ENCODE measurements at regions of chr13 and their contacts with region 1.

Region 1: GRCh38 chr13:77477299-77477848 is 58.1 kb upstream of the SCEL start:
- DNase-seq: no peak
- H3K4me3 ChIP-seq: peak overlapping the region in 1 of 4 donors; percentile 51
- H3K27ac ChIP-seq: no peak overlapping the region
- H3K4me1 ChIP-seq: peaks cover 0 to 5% of the 10 kb centered on the region in 2 donors
- H3K27me3 ChIP-seq: no peaks in the 10 kb centered on the region
- CTCF ChIP-seq: no peak
- POLR2A ChIP-seq: no peak

Region 2: DNA sequence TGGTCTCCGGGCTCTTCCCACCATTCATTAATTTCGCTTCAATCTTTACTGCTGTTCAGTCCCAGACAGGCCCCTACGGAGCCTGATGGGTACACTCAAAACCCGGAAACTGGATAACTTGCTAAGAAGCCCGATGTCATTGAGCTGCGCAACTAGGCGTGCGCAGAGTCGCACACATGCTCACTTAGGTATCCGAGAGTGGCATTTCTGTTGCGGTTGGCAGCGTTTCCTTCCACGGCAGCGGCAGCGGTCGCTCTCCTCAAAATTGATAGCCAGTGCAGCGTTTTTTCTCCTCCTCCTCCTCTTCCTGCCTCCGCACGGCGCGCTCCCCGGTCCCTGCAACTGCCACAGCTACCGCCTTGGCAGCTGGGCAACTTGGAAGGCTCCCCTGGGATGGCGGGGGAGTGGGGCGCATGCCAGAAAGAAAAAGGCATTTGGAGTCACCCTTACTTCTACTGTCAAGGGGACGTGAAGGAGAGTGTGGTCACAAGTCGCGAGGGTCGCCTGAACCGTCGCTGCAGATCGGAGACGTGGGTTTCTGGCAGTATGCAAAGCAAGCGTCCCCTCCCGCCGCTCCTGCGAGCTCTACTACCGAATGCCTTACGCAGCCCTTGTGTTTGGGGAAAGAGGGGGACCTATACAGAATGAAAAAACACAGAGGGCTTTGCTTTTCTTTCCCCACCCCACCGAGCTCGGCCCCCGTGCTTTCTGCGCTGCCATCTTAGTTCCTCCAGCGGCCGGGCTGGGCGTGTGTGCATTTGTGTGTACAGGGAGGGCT is 148.1 kb before region 1 on chr13:
- intact Hi-C with region 1: loop called (anchors 5 to 10 kb)
- DNase-seq: peak; percentile 85 to 95 (median 88)
- H3K4me3 ChIP-seq: peak overlapping the region; percentile 12 to 77 (median 43)
- H3K27ac ChIP-seq: peak overlapping the region; percentile 63 to 88 (median 77)
- H3K4me1 ChIP-seq: peaks cover 4 to 27% of the 10 kb centered on the region in 2 donors
- H3K27me3 ChIP-seq: no peaks in the 10 kb centered on the region
- CTCF ChIP-seq: peak in 1 of 6 experiments; percentile 9
- POLR2A ChIP-seq: peak; percentile 73 to 75

Region 3: DNA sequence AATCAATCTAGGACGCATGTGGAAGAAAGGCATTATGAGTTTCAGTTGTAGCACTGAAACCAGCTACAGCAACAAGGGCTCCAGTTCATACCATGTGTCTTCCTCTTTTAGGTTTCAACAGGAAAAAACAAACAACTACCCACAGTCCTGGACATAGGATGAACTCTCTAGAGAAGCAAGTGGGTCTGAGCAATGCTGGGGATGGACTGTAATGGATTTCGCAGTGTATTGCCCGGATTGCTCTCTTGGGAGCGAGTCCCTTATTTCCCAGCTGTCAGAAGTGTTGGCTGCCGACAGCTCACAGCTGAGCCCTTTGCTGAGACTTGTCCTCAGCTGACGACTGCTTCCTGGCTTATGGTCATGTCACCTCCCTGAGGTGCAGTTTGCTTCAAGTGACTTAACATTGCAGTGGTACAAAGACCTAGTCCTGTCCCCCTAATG is 138.4 kb before region 1 on chr13:
- intact Hi-C with region 1: loop called in 1 of 2 experiments (anchors 10 kb)
- DNase-seq: no peak
- H3K4me3 ChIP-seq: no peak overlapping the region
- H3K27ac ChIP-seq: no peak overlapping the region
- H3K4me1 ChIP-seq: no peaks in the 10 kb centered on the region
- H3K27me3 ChIP-seq: no peaks in the 10 kb centered on the region
- CTCF ChIP-seq: no peak
- POLR2A ChIP-seq: no peak